ENCODE measurements at regions of chr3 and their contacts with region 1.

Region 1: DNA sequence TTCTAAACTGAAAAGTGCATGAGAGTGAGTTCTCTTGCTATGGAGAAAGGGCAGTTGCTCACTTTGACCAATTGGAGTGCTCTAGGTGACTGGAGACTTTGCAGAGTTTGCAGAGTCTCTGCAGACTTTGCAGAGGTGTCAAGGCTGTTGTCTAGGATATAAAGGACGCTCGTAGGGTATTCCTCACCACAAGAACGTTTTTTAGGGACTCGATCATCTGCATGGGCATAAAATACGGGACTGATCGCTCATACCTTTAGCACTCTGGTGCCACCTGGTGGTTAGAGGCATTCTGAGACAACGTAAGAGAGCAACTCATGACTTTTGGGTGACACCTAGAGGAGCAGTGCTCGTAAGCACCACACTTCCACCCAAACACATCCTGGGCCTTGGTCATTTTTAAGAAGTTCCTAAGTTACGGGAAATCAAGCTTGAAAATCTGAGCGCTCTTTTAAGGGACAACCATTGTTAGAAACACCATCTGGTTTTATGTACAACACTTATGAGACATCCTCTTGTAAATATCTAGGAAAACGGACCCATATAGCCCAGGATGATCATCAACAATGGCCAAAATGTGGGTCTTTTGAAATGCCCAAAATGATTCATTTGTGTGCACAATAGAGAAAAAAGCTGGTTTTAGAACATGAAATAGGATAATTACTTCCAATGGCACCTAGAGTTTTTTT is 51.6 kb upstream of the XCR1 start:
- DNase-seq: peak; percentile 93
- ATAC-seq: peak; percentile 97
- H3K4me3 ChIP-seq: no peak overlapping the region
- H3K27ac ChIP-seq: no peak overlapping the region
- H3K4me1 ChIP-seq: no peaks in the 10 kb centered on the region
- H3K27me3 ChIP-seq: peaks cover 9% of the 10 kb centered on the region
- CTCF ChIP-seq: peak; percentile 100
- POLR2A ChIP-seq: peak; percentile 57; the same call in 1 of the 2 replicates
- RAD21 ChIP-seq: peak; percentile 100

Region 2: GRCh38 chr3:45037734-45038455 is 1041.0 kb before region 1 on chr3:
- CTCF ChIA-PET with region 1: no interaction called
- POLR2A ChIA-PET with region 1: no interaction called
- dilution Hi-C with region 1: no loop called
- in situ Hi-C with region 1: loop called (anchors 25 kb)
- intact Hi-C with region 1: loop called (anchors 5 kb)
- DNase-seq: peak; percentile 93
- ATAC-seq: peak; percentile 70
- H3K4me3 ChIP-seq: no peak overlapping the region
- H3K27ac ChIP-seq: no peak overlapping the region
- H3K4me1 ChIP-seq: peaks cover 20% of the 10 kb centered on the region
- H3K27me3 ChIP-seq: no peaks in the 10 kb centered on the region
- CTCF ChIP-seq: peak; percentile 98
- POLR2A ChIP-seq: 0 out of 2 replicates have a peak, but pooled peaks have one; percentile 44
- RAD21 ChIP-seq: peak; percentile 98

Region 3: GRCh38 chr3:45760878-45761711 is 317.8 kb before region 1 on chr3:
- CTCF ChIA-PET with region 1: interaction called, 4 read pairs
- POLR2A ChIA-PET with region 1: no interaction called
- dilution Hi-C with region 1: no loop called
- in situ Hi-C with region 1: loop called (anchors 5 kb)
- intact Hi-C with region 1: loop called (anchors 1 kb)
- DNase-seq: peak; percentile 76
- ATAC-seq: peak; percentile 99
- H3K4me3 ChIP-seq: no peak overlapping the region
- H3K27ac ChIP-seq: no peak overlapping the region
- H3K4me1 ChIP-seq: no peaks in the 10 kb centered on the region
- H3K27me3 ChIP-seq: peaks cover 12% of the 10 kb centered on the region
- CTCF ChIP-seq: peak; percentile 90
- POLR2A ChIP-seq: no peak
- RAD21 ChIP-seq: peak; percentile 93

Region 4: DNA sequence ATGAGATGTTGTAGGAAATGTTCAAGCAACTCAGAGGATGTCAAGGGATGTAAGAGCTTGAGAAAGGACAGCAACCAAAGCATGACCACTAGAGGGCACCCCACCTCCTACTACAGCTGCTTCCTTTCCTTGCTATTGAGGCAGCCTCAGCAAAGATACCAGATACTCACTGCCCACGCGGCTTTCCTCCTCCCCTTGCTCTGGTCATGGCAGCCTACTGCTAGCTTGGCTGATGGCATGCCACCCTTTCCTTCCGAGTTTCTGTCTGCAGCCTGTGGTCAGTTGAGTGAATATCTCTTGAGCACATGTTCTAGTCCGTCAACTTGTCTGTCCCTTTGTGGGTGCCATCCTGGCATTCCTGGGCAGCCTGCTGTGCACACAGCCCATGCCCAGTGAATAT is 140.0 kb before region 1 on chr3:
- CTCF ChIA-PET with region 1: interaction called, 84 read pairs
- POLR2A ChIA-PET with region 1: no interaction called
- dilution Hi-C with region 1: no loop called
- in situ Hi-C with region 1: loop called (anchors 5 kb)
- intact Hi-C with region 1: loop called (anchors 1 kb)
- DNase-seq: peak; percentile 91
- ATAC-seq: peak; percentile 96
- H3K4me3 ChIP-seq: no peak overlapping the region
- H3K27ac ChIP-seq: no peak overlapping the region
- H3K4me1 ChIP-seq: peaks cover 4% of the 10 kb centered on the region
- H3K27me3 ChIP-seq: no peaks in the 10 kb centered on the region
- CTCF ChIP-seq: peak; percentile 98
- POLR2A ChIP-seq: no peak
- RAD21 ChIP-seq: peak; percentile 97

Region 5: DNA sequence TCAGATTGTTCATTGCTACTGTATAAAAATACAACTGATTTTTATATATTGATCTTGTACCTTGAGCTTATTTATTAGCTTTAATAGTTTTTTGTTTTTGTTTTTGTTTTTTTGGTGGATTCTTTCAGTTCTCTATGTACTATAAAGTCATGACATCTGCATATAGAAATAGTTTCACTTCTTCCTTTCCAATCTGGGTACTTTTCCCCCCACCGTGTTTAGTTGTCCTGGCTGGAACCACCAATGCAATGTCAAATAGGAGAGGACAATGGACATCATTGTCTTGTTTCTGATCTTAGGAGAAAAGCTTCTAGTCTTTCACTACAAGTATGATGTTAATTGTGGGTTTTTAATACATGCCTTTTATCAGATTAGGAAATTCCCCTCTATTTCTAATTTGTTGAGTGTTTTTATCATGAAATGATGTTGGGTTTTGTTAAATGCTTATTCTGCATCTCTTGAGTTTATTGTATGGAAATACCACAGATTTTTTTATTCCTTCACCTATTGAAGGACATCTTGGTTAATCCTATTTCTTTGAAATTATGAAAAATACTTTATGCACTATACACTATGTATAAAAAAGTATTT is 48.8 kb before region 1 on chr3:
- CTCF ChIA-PET with region 1: no interaction called
- POLR2A ChIA-PET with region 1: no interaction called
- dilution Hi-C with region 1: no loop called
- in situ Hi-C with region 1: no loop called
- intact Hi-C with region 1: no loop called
- DNase-seq: no peak
- ATAC-seq: no peak
- H3K4me3 ChIP-seq: no peak overlapping the region
- H3K27ac ChIP-seq: no peak overlapping the region
- H3K4me1 ChIP-seq: no peaks in the 10 kb centered on the region
- H3K27me3 ChIP-seq: no peaks in the 10 kb centered on the region; the same call in none of the 2 replicates
- CTCF ChIP-seq: no peak
- POLR2A ChIP-seq: no peak
- RAD21 ChIP-seq: no peak

Region 6: DNA sequence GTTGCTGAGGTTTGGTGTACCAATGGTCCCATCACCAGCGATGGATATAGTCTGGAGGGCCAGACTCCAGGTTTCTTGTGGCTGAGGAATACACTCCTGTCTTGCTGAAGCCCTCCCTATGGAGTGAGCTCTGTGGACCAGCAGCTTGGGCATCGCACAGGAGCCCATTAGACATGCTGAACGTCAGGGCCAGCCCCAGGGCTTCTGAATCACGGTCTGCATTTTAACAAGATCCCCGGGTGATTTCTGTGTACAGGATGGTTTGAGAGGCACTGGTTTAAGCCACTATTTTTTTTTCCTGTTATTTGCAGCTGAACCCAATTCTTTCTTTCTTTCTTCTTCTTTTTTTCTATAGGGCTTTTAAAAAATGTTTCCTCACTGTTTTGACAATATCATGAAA is 17.9 kb after region 1 on chr3:
- CTCF ChIA-PET with region 1: no interaction called
- POLR2A ChIA-PET with region 1: no interaction called
- dilution Hi-C with region 1: no loop called
- in situ Hi-C with region 1: no loop called
- intact Hi-C with region 1: no loop called
- DNase-seq: no peak
- ATAC-seq: no peak
- H3K4me3 ChIP-seq: no peak overlapping the region
- H3K27ac ChIP-seq: no peak overlapping the region
- H3K4me1 ChIP-seq: peaks cover 6% of the 10 kb centered on the region
- H3K27me3 ChIP-seq: peaks cover 3% of the 10 kb centered on the region; the same call in 1 of the 2 replicates
- CTCF ChIP-seq: no peak
- POLR2A ChIP-seq: no peak
- RAD21 ChIP-seq: no peak

Region 7: GRCh38 chr3:46558184-46559043 is 479.6 kb after region 1 on chr3:
- CTCF ChIA-PET with region 1: no interaction called
- POLR2A ChIA-PET with region 1: no interaction called
- dilution Hi-C with region 1: no loop called
- in situ Hi-C with region 1: no loop called
- intact Hi-C with region 1: loop called (anchors 5 kb)
- DNase-seq: peak; percentile 60
- ATAC-seq: peak; percentile 28
- H3K4me3 ChIP-seq: no peak overlapping the region
- H3K27ac ChIP-seq: peak overlapping the region; percentile 78
- H3K4me1 ChIP-seq: peaks cover 13% of the 10 kb centered on the region
- H3K27me3 ChIP-seq: no peaks in the 10 kb centered on the region
- CTCF ChIP-seq: peak; percentile 55
- POLR2A ChIP-seq: no peak
- RAD21 ChIP-seq: peak; percentile 66